Common myeloid progenitor, CD34-positive (primary cell): ENCODE measurements at regions of chr2 and their contacts with region 1.

Region 1: GRCh38 chr2:113181258-113182051 is 7.7 kb downstream of the PSD4 start:
- DNase-seq: peak in 2 of 3 donors; percentile 71 to 82
- H3K4me3 ChIP-seq: peak overlapping the region in 3 of 7 experiments; percentile 9 to 34 (median 15)
- H3K27ac ChIP-seq: no peak overlapping the region
- H3K4me1 ChIP-seq: peaks cover 3 to 44% (median 37%) of the 10 kb centered on the region in 4 experiments
- H3K27me3 ChIP-seq: no peaks in the 10 kb centered on the region

Region 2: DNA sequence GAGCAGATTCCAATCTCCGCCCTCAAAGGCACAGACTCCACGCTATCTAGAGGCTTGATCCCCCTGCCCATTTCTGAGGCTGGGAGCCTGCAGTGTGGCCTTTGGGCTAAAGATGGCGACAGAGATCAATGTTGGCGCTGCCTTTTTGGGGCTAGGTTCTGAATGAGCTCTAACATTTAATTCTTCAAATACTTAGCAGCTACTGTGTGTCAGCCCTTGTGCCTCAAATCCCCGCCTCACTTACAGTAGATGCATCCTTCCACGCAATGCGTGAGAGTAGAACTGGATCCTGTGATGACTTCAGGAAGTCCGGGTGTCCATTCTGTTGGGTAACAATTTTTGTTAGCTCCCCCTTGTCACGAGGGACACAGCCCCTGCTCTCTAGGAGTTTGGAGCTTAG is 101.3 kb before region 1 on chr2:
- CTCF ChIA-PET with region 1: interaction called, 11 read pairs
- POLR2A ChIA-PET with region 1: no interaction called
- DNase-seq: peak; percentile 21 to 55 (median 48)
- H3K4me3 ChIP-seq: no peak overlapping the region
- H3K27ac ChIP-seq: no peak overlapping the region
- H3K4me1 ChIP-seq: peaks cover 0 to 2% (median 0%) of the 10 kb centered on the region in 4 experiments
- H3K27me3 ChIP-seq: no peaks in the 10 kb centered on the region

Region 3: DNA sequence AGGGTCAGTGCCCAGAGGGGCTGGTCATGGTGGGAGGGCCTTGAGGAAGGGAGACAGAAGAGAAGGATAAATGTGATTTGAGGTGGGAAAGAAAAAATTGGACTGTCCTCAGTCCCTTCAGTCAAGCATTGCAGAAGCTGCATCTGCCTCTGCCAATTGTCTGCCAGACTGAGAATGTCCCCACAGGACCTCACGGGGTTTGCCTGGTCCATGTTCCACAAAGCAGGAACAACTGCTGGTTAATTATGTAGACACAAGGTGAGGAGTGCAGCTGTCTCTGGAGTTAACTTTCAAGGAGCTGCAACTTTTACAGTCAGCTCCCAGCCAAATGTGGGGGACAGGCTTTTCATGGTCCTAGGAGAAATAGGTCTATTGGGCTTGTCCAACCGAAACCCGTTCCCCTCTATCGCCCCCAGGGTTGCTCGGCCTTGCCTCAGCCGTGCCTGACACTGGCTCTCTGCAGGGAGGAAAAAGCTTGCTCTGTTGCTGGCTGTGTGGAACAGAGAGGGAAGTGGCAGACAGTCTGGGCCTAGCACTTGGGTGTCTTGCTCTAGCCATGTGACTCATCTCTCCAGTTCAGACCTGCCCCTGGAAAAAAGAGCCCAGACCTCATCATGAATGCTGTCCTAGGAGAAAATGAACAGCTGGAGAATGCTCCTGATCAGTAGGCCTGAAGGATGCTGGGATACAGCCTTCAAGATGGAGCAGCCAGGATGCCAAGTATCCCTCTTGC is 128.4 kb after region 1 on chr2:
- CTCF ChIA-PET with region 1: no interaction called
- POLR2A ChIA-PET with region 1: no interaction called
- DNase-seq: no peak
- H3K4me3 ChIP-seq: no peak overlapping the region
- H3K27ac ChIP-seq: no peak overlapping the region
- H3K4me1 ChIP-seq: peaks cover 0 to 17% (median 1%) of the 10 kb centered on the region in 4 experiments
- H3K27me3 ChIP-seq: no peaks in the 10 kb centered on the region

Region 4: DNA sequence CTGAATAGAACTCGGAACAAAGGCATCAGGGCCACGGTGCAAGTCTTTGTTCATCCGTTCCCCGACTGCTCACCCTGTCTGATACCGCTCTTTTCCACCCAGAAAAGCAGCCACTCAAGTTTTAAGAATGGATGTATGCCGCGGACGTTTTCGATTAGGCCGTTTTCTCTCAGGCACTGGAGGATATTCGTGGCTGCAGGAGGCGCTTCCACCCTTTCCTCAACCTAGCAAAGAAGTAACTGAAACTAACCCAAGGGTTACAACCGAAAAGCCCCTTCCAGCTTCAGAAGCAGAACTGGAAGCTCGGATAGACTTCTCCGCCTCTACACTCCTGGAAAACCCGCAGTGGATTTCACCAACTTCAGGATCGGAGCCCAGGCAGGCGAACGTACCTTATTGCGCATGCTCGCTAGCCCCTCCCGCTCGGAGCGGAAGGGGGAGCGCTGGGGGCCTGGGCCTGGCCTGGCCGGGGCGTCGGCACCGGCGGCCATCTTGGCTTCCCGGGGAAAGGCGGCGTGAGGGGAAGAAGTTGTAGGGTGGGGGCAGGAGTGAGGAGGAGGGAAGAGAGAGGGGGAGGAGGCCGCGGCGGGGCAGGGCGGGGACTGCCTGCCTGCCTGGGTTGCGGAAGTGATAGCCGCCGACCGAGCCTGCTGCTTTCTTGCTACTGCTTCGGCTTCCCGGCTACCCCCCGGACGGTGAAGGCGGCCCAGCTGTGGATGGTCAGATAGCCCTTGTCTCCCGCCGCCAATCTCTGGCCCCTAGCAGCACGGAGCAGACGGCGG is 708.2 kb after region 1 on chr2 and contains the start of gene ACTR3:
- CTCF ChIA-PET with region 1: no interaction called
- POLR2A ChIA-PET with region 1: no interaction called
- DNase-seq: peak; percentile 99 to 100 (median 99)
- H3K4me3 ChIP-seq: peak within 1 kb of the TSS; percentile 75 to 98 (median 95)
- H3K27ac ChIP-seq: peak within 1 kb of the TSS; percentile 90 to 96
- H3K4me1 ChIP-seq: peaks cover 28 to 57% (median 41%) of the 10 kb centered on the region in 4 experiments
- H3K27me3 ChIP-seq: no peaks in the 10 kb centered on the region